Cardiac septum (tissue), 1 donor: ENCODE measurements at regions of chr1 and their contacts with region 1.

Region 1: DNA sequence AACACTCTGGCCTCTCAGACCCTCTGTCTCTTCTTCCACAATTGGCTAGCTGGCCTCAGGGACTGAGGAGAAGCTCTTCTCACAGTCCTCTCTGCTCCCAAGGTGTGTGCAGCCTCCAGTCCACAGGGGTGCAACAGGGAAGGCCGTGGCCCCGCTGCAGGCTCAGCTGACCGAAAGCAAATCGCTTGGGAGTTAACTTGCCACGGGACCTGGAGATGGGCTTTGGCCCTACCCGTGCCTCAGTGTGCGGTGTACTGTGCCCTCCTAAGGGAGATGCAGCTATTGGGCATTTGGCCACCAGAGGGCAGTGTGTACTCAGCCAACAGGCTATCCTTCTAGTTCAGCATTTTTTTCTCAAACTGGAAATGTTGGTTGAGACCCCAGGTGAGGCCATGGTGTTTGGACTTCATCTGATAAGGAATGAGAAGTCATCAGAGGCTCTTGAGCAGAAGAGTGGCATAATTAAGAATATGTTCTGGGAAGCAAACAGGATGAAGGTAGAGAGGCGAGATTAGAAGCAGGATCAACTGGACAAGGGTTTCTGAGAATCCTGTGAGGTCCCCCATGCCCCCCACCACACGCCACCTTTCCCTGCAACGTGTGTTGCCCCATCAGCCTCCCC is 42.5 kb upstream of the TMEM125 start:
- DNase-seq: peak; percentile 86

Region 2: GRCh38 chr1:43383449-43383848 is 156.2 kb after region 1 on chr1:
- intact Hi-C with region 1: loop called (anchors 5 kb)
- DNase-seq: no peak

Region 3: DNA sequence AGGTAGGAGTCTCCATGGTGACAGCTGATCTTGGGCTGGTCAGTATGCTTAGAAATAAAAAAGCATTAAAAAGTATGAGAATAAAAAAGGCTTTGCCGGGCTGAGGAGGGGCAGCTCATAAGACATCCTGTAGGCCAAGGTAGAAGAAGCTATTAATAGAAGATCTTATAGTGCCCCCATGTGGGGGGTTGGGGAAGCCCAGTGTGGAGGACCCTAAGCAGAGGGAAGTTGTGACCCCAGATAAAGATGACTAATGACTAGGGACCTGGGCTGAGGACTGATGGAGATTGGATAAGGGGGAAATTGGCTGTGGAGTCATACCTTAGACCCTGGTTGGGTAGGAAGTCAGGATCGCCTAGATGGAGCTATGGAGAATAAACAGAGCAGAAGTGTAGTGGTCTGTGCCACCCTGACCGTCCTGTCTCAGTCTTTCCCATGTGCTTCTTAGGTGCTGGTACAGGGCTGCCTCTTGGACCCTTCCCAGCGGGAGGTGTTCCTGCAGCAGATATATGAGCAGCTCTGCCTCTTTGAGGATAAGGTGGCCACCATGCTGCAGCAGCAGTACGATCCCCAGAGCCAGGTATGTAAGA is 187.5 kb after region 1 on chr1:
- intact Hi-C with region 1: loop called (anchors 2 kb)
- DNase-seq: no peak